H1 (cell line): ENCODE measurements at regions of chr5 and their contacts with region 1.

Region 1: GRCh38 chr5:148957591-148958202 is 105.2 kb downstream of the SH3TC2 start:
- DNase-seq: peak in 1 of 2 experiments; percentile 85
- H3K4me3 ChIP-seq: no peak overlapping the region
- H3K27ac ChIP-seq: no peak overlapping the region
- H3K4me1 ChIP-seq: peaks cover 3 to 6% (median 5%) of the 10 kb centered on the region in 4 experiments; a peak in 6 of 7 replicates
- H3K27me3 ChIP-seq: no peaks in the 10 kb centered on the region
- CTCF ChIP-seq: peak; percentile 73 to 87 (median 86)
- EP300 ChIP-seq: no peak
- POLR2A ChIP-seq: no peak
- RAD21 ChIP-seq: peak; percentile 91 to 96

Region 2: DNA sequence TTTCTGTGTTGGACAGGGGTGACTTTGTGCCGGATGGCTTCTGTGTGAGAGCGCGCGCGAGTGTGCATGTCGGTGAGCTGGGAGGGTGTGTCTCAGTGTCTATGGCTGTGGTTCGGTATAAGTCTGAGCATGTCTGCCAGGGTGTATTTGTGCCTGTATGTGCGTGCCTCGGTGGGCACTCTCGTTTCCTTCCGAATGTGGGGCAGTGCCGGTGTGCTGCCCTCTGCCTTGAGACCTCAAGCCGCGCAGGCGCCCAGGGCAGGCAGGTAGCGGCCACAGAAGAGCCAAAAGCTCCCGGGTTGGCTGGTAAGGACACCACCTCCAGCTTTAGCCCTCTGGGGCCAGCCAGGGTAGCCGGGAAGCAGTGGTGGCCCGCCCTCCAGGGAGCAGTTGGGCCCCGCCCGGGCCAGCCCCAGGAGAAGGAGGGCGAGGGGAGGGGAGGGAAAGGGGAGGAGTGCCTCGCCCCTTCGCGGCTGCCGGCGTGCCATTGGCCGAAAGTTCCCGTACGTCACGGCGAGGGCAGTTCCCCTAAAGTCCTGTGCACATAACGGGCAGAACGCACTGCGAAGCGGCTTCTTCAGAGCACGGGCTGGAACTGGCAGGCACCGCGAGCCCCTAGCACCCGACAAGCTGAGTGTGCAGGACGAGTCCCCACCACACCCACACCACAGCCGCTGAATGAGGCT is 131.5 kb before region 1 on chr5 and contains the start of gene ADRB2:
- CTCF ChIA-PET with region 1: interaction called, 46 read pairs
- POLR2A ChIA-PET with region 1: no interaction called
- DNase-seq: peak; percentile 80 to 89
- H3K4me3 ChIP-seq: peak within 1 kb of the TSS; percentile 75 to 90 (median 82)
- H3K27ac ChIP-seq: no peak within 1 kb of the TSS
- H3K4me1 ChIP-seq: peaks cover 0 to 2% (median under 1%) of the 10 kb centered on the region in 4 experiments; a peak in 5 of 7 replicates
- H3K27me3 ChIP-seq: peaks cover 5 to 20% (median 15%) of the 10 kb centered on the region in 4 experiments
- CTCF ChIP-seq: peak in 1 of 3 experiments; percentile 4; a peak in 1 of 4 replicates
- EP300 ChIP-seq: no peak
- POLR2A ChIP-seq: peak in 1 of 2 experiments; percentile 53; a peak in 2 of 3 replicates
- RAD21 ChIP-seq: no peak
- total RNA-seq, gene ADRB2: 0.54 and 0.65 TPM in 2 replicates

Region 3: DNA sequence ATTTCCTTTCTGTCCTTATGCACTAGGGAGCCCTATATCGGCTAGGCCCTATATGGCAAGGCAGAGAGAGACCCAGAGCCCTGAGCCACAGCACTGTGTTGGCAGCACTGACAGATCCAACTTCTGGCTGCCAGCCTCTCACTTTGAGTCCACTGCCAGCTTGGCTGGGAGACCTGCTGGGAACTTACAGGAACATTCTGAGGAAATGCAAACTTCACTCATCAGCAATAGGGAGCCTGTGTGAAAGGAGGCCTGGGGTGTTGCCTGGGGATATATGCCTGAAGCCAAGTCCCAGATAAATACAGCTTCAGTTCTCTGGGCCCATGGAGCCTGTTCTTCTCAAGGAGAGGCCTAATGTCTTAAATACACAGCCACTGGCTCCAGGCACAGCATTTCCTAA is 53.3 kb before region 1 on chr5:
- CTCF ChIA-PET with region 1: interaction called, 14 read pairs
- POLR2A ChIA-PET with region 1: interaction called, 3 read pairs
- DNase-seq: no peak
- H3K4me3 ChIP-seq: no peak overlapping the region
- H3K27ac ChIP-seq: no peak overlapping the region
- H3K4me1 ChIP-seq: no peaks in the 10 kb centered on the region; a peak in 1 of 7 replicates
- H3K27me3 ChIP-seq: no peaks in the 10 kb centered on the region
- CTCF ChIP-seq: no peak
- EP300 ChIP-seq: no peak
- POLR2A ChIP-seq: no peak
- RAD21 ChIP-seq: no peak

Region 4: DNA sequence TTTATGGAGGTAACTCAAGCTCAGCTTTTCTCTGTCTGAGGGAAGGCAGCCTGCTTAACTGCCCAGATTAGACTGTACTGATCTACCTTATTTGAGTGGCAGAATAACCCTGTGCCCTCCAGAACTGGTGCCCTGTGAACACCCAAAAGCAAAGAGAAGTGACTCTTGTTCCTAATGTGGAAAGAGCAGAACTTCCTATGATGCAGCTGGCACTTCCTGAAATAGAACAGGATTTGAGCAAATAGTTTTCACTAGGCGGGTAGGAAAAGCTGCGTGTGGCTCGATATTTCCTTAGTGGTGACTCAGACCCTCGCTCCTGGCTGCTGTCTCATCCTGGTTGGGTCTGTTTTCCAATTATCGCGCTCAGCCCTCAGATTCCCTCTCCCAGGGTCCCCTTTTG is 15.3 kb after region 1 on chr5:
- CTCF ChIA-PET with region 1: interaction called, 92 read pairs
- POLR2A ChIA-PET with region 1: no interaction called
- DNase-seq: no peak
- H3K4me3 ChIP-seq: no peak overlapping the region
- H3K27ac ChIP-seq: no peak overlapping the region
- H3K4me1 ChIP-seq: peaks cover 0 to 7% (median 3%) of the 10 kb centered on the region in 4 experiments; a peak in 5 of 7 replicates
- H3K27me3 ChIP-seq: no peaks in the 10 kb centered on the region
- CTCF ChIP-seq: no peak
- EP300 ChIP-seq: no peak
- POLR2A ChIP-seq: no peak
- RAD21 ChIP-seq: no peak

Region 5: GRCh38 chr5:148998174-148998797 is 40.6 kb after region 1 on chr5:
- CTCF ChIA-PET with region 1: interaction called, 98 read pairs
- POLR2A ChIA-PET with region 1: no interaction called
- DNase-seq: no peak
- H3K4me3 ChIP-seq: no peak overlapping the region
- H3K27ac ChIP-seq: no peak overlapping the region
- H3K4me1 ChIP-seq: no peaks in the 10 kb centered on the region; a peak in 1 of 7 replicates
- H3K27me3 ChIP-seq: no peaks in the 10 kb centered on the region
- CTCF ChIP-seq: peak in 2 of 3 experiments; percentile 56 to 72; a peak in 2 of 4 replicates
- EP300 ChIP-seq: no peak
- POLR2A ChIP-seq: no peak
- RAD21 ChIP-seq: peak; percentile 70 to 74

Region 6: DNA sequence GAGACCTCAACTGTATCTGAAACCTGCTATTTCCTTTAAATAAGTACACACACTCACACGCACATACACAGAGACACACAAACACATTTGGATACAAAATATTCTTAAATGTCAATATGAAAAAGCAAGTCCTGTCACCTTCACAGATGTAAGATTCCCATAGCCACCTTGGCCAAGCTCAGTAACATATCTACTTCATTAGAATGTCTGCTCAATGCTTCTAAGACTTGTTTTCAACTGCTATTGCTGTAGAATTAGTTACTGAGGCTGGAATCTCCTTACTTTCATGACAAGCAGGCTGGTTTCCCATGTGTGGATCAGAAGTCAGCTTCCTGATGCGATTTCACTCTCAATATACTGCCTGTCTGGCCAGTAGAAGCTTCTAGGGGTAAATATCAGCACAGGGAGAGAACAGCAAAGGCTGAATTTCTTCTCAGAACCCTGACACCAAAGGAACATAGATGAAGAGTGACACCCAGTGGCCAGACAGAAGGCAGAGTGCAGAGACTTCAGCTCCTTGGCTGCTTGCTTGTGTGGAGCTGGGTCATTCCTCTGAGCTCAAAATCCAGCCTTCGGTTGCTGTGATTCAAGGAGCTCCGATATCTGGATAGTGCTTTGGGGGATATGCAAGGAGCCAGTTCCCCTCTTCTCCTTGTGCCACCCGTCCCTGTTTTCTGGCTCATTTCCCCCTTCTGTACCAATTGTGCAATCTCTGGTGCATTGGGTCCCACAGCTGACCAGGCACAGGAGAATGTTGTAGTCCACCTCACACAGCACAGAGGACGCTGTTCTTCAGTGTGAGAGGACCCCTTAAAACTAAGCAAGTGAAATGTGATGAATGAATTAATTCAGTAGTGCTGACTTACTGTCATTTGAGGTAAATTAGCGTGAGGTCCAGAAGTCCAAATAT is 157.0 kb after region 1 on chr5:
- CTCF ChIA-PET with region 1: interaction called, 17 read pairs
- POLR2A ChIA-PET with region 1: no interaction called
- DNase-seq: peak in 1 of 2 experiments; percentile 60
- H3K4me3 ChIP-seq: no peak overlapping the region
- H3K27ac ChIP-seq: no peak overlapping the region
- H3K4me1 ChIP-seq: no peaks in the 10 kb centered on the region
- H3K27me3 ChIP-seq: no peaks in the 10 kb centered on the region
- CTCF ChIP-seq: peak; percentile 63 to 96 (median 84)
- EP300 ChIP-seq: no peak
- POLR2A ChIP-seq: no peak
- RAD21 ChIP-seq: peak; percentile 90 to 97

Region 7: GRCh38 chr5:149284501-149284900 is 326.8 kb after region 1 on chr5:
- CTCF ChIA-PET with region 1: no interaction called
- POLR2A ChIA-PET with region 1: no interaction called
- DNase-seq: no peak
- H3K4me3 ChIP-seq: no peak overlapping the region
- H3K27ac ChIP-seq: no peak overlapping the region
- H3K4me1 ChIP-seq: no peaks in the 10 kb centered on the region
- H3K27me3 ChIP-seq: no peaks in the 10 kb centered on the region; a peak in 1 of 7 replicates
- CTCF ChIP-seq: no peak
- EP300 ChIP-seq: no peak
- POLR2A ChIP-seq: no peak
- RAD21 ChIP-seq: no peak